AG04450 (cell line): ENCODE measurements at regions of chr9 and their contacts with region 1.

Region 1: GRCh38 chr9:6367128-6367890 is 39.1 kb downstream of the TPD52L3 start:
- DNase-seq: peak; percentile 13
- H3K4me3 ChIP-seq: no peak overlapping the region
- H3K27ac ChIP-seq: no peak overlapping the region
- H3K27me3 ChIP-seq: no peaks in the 10 kb centered on the region
- CTCF ChIP-seq: no peak

Region 2: DNA sequence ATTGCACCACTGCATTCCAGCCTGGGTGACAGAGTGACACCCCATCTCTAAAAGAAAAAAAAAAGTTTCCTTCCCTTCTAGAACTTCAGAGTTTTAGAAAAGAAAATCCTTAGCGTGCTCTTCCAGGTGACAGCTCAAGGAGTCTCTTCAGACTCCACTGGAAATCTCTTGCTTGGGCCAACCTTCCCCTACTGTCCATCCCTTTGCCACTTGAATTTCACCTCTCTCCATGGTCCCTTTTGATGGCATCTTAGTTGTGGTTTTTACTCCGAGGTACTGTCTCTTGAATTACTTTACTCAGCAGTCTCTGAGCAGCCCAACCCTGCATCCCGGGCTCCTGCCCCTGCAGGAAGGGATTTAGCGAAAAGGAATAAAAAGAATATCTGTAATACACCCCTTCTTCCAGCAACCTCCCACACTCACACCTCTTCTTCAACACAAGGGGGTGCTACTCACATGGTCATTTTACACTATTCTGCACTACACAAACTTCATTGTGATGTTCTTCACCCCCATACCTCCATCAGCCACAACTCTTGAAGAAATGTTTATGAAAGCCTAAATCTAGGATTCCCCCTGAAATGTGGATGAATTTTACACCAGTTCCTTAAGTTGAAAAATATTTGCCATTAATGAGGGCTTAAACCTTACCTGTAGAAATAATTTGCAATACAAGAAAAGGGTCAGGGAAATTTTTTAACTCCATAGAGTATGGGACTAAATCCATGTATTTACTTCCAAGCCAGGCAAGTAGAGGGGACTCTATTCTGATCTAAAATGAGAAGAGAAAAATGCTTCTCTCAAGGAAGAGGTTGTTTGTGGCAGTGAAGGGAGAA is 13.2 kb before region 1 on chr9:
- CTCF ChIA-PET with region 1: interaction called, 17 read pairs
- POLR2A ChIA-PET with region 1: no interaction called
- DNase-seq: peak; percentile 48
- H3K4me3 ChIP-seq: no peak overlapping the region
- H3K27ac ChIP-seq: no peak overlapping the region
- H3K27me3 ChIP-seq: no peaks in the 10 kb centered on the region
- CTCF ChIP-seq: peak; percentile 79